ENCODE measurements at regions of chr10 and their contacts with region 1.

Region 1: DNA sequence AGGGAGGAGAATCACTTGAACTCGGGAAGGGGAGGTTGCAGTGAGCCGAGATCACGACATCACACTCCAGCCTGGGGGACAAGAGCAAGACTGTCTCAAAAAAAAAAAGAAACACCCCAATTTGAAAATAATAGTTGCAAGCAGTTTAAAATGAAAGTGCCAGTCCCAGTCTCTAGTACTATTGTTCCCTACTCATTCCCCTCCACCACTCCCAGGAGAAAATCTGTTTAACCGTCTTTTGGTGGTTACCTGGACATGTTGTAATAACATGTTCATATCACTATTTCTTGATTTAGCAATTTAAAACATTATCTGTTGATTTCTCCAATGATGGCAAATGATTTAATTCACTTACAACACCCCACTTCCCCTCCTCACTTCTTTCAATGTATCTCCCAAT is 44.7 kb downstream of the KIFBP start:
- DNase-seq: no peak
- ATAC-seq: no peak
- H3K4me3 ChIP-seq: no peak overlapping the region
- H3K27ac ChIP-seq: no peak overlapping the region
- H3K4me1 ChIP-seq: no peaks in the 10 kb centered on the region
- H3K27me3 ChIP-seq: no peaks in the 10 kb centered on the region
- CTCF ChIP-seq: no peak
- EP300 ChIP-seq: no peak
- POLR2A ChIP-seq: no peak
- RAD21 ChIP-seq: no peak

Region 2: DNA sequence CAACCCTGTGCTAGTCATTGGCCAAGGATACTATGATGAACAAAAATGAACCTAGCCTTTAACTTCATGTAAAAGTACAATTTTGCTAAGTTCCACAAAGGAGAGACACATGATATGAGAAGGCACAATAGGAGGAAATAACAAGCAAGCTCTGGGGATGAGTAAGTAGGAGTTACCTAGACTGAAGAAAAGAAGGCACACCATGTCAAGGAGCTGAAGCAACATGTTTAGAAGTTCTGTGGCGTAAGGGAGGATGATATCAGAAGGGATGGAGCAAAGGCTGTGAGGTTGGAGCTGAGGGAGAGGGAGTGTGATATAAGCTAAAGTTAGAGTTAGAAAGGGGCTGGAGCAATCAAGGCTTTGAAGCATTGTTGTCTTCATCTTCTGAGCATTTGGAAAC is 19.1 kb before region 1 on chr10:
- CTCF ChIA-PET with region 1: no interaction called
- POLR2A ChIA-PET with region 1: no interaction called
- RAD21 ChIA-PET with region 1: interaction called, 3 read pairs
- SMC1A ChIA-PET with region 1: interaction called, 14 read pairs
- in situ Hi-C with region 1: no loop called
- intact Hi-C with region 1: no loop called
- DNase-seq: no peak
- ATAC-seq: no peak
- H3K4me3 ChIP-seq: no peak overlapping the region
- H3K27ac ChIP-seq: no peak overlapping the region
- H3K4me1 ChIP-seq: no peaks in the 10 kb centered on the region
- H3K27me3 ChIP-seq: no peaks in the 10 kb centered on the region
- CTCF ChIP-seq: no peak
- EP300 ChIP-seq: no peak
- POLR2A ChIP-seq: no peak
- RAD21 ChIP-seq: no peak

Region 3: DNA sequence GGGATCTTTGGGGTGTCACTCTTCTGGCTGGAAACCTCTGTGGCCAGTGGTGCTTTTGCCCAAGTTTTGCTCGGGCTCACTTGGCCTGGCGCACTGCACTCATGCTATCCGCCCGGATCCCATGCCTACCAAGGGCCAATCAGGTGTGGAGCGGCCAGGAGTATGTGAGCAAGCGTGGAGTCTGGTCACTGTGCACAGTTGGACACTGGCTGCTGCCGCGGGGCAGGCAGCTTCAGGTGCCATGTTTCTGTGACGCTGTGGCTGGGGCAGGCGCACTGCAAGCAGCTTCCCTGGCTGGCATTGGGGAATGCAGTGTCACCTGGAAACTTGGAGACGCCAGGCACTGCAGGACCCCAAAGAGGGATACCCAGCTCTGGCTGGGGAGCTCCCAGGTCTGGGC is 494.7 kb after region 1 on chr10:
- CTCF ChIA-PET with region 1: no interaction called
- POLR2A ChIA-PET with region 1: no interaction called
- RAD21 ChIA-PET with region 1: no interaction called
- SMC1A ChIA-PET with region 1: no interaction called
- in situ Hi-C with region 1: no loop called
- intact Hi-C with region 1: no loop called
- DNase-seq: no peak
- ATAC-seq: no peak
- H3K4me3 ChIP-seq: no peak overlapping the region
- H3K27ac ChIP-seq: no peak overlapping the region
- H3K4me1 ChIP-seq: no peaks in the 10 kb centered on the region
- H3K27me3 ChIP-seq: no peaks in the 10 kb centered on the region
- CTCF ChIP-seq: no peak
- EP300 ChIP-seq: no peak
- POLR2A ChIP-seq: no peak
- RAD21 ChIP-seq: no peak

Measured in GM12878 (cell line).